ENCODE measurements at regions of chr16 and their contacts with region 1.

Region 1: GRCh38 chr16:68310761-68311511 is at the starts of genes PRMT7 and SLC7A6OS:
- DNase-seq: peak; percentile 95
- H3K4me3 ChIP-seq: peak within 1 kb of the TSS; percentile 94
- H3K27ac ChIP-seq: peak within 1 kb of the TSS; percentile 66
- H3K4me1 ChIP-seq: peaks cover 28% of the 10 kb centered on the region
- CTCF ChIP-seq: no peak
- total RNA-seq, gene PRMT7: 75.3 and 85.1 TPM in 2 replicates
- total RNA-seq, gene SLC7A6OS: 28.6 and 35.2 TPM in 2 replicates

Region 2: DNA sequence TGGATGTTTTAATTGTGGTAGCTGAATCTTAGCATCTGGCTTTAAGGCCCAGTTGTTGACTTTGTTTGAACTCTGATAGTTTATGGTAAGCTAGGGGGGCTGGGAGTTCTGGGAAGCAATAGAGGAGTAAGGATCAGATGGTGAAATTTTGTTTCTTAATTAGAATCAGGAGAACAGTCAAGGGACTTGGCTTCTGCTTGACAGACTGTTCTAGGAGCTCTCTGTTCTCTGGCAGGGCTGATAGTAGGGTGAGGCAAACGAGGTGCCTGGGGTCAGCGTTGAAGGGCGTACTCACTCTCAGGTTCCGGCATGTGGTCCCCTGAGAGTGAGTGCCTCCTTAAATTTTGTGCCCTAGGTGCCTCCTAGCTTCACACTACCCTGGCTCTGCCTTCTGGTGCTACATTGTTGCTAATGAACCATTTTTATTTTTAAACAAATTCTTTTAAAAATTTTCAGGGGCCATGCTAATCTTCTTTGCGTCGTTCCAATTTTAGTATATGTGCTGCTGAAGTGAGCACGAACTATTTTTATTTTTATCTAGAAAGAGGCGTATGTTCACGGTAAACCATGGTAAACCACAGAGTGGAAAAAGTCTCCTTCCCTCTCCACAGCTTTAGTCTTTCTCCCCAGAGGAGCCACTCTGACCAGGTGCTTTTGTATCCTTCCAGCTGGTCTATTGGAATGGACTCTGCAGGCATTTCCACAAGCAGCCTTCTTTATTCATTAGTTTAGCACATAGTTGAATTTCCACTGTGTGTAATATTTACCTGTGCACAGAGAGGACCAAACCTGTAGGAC is 26.9 kb before region 1 on chr16:
- CTCF ChIA-PET with region 1: interaction called, 4 read pairs
- POLR2A ChIA-PET with region 1: interaction called, 19 read pairs
- intact Hi-C with region 1: loop called (anchors 1 kb)
- DNase-seq: peak; percentile 65
- H3K4me3 ChIP-seq: peak overlapping the region; percentile 58
- H3K27ac ChIP-seq: peak overlapping the region; percentile 97
- H3K4me1 ChIP-seq: peaks cover 99% of the 10 kb centered on the region
- CTCF ChIP-seq: no peak

Region 3: DNA sequence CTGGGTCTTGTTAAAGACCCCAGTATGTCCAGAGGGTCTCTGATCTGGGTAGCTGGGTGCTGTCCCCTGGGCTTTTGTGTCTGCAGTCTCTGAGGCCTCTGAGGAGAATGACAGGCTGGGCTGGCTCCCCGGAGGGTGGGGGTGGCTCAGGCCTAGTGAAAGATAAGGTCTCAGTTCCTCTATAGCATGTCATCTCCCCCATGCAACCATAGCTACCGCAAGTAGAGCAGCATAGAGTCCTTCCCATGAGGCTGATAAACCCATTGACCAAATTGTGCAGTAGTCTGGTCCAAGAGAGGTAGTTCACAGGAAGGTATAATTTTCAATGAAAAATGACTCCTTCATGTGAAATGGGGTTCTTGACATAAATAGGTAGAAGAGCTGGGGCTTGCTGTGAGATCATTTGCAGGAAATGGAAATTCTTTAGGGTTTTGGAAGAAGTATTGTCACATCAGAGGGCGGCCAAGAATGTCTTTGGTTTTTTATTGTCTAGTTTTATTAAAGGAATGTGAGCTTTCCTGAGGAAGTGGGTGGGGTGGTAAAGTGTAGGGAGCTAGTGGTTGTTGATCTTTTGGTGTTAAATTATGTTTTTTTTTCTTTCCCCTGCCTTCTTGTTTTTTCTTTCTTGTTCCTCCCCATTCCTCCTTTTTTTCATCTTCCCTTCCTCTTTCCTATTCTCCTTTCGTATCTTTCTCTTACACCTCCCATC is 21.2 kb before region 1 on chr16:
- CTCF ChIA-PET with region 1: interaction called, 4 read pairs
- POLR2A ChIA-PET with region 1: interaction called, 19 read pairs
- intact Hi-C with region 1: loop called (anchors 1 kb)
- DNase-seq: peak; percentile 80
- H3K4me3 ChIP-seq: no peak overlapping the region
- H3K27ac ChIP-seq: peak overlapping the region; percentile 66
- H3K4me1 ChIP-seq: peaks cover 72% of the 10 kb centered on the region
- CTCF ChIP-seq: no peak

Region 4: GRCh38 chr16:68328151-68328859 is 17.4 kb after region 1 on chr16:
- CTCF ChIA-PET with region 1: no interaction called
- POLR2A ChIA-PET with region 1: interaction called, 9 read pairs
- intact Hi-C with region 1: loop called (anchors 1 kb)
- DNase-seq: peak; percentile 91
- H3K4me3 ChIP-seq: no peak overlapping the region
- H3K27ac ChIP-seq: no peak overlapping the region
- H3K4me1 ChIP-seq: peaks cover 28% of the 10 kb centered on the region
- CTCF ChIP-seq: peak; percentile 96

Region 5: GRCh38 chr16:68345351-68345810 is 34.4 kb after region 1 on chr16:
- CTCF ChIA-PET with region 1: no interaction called
- POLR2A ChIA-PET with region 1: no interaction called
- intact Hi-C with region 1: no loop called
- DNase-seq: no peak
- H3K4me3 ChIP-seq: no peak overlapping the region
- H3K27ac ChIP-seq: no peak overlapping the region
- H3K4me1 ChIP-seq: no peaks in the 10 kb centered on the region
- CTCF ChIP-seq: no peak